H1 (cell line): ENCODE measurements at regions of chr12 and their contacts with region 1.

Region 1: DNA sequence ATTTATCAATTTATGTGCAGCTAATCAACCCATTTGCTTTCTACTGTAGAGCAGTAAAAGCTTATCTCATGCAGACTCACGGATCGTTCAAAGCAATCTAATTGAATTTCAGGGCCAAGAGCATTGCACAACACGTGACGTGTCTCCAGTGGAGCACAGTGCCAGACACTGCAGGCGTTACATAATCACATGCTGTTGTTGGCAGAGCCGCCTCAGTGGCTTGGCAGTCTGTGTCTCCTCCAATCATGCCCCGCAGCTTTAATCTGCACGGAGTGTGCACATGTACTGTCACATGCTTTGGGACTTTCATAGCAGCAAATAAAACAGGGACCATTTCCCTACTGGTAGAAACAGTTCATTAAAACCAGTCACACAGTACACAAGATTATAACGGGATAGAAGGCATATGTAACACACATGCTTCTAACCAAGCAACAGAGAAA is 309.3 kb downstream of the ITPR2 start:
- DNase-seq: no peak
- H3K4me3 ChIP-seq: no peak overlapping the region
- H3K27ac ChIP-seq: no peak overlapping the region
- H3K4me1 ChIP-seq: peaks cover 0 to 2% (median 0%) of the 10 kb centered on the region in 4 experiments; a peak in 1 of 7 replicates
- H3K27me3 ChIP-seq: no peaks in the 10 kb centered on the region
- CTCF ChIP-seq: no peak
- EP300 ChIP-seq: no peak
- POLR2A ChIP-seq: no peak
- RAD21 ChIP-seq: no peak

Region 2: DNA sequence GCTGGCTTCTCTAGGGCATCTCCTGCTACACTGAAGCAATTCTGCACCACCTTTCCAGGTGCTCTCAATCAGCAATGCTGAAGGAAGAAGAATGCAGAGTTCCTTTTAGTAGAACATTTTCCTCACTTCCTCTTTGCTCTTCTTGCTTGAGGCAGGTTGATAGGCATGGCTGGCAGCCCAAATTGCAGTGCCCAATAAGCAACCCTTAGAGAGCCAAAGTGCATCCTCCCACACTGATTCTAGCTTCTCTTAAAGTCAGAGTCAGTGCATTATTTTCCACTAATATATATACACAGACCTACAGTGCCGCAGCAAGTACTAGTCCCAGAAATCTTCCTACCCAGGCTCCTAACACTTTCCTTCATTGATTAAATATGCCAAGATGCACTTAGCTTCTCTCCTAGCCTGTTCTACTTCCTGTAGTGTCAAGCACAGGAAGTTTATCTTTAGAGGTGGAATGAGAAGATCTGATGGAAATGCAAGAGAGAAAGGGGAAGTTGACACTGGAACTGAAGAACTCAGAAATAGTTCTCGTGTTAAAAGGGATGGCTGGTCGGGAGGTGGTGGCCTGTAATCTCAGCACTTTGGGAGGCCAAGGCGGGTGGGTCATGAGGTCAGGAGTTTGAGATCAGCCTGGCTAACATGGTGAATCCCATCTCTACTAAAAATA is 195.6 kb before region 1 on chr12:
- CTCF ChIA-PET with region 1: no interaction called
- POLR2A ChIA-PET with region 1: no interaction called
- DNase-seq: no peak
- H3K4me3 ChIP-seq: no peak overlapping the region
- H3K27ac ChIP-seq: no peak overlapping the region
- H3K4me1 ChIP-seq: peaks cover 0 to 2% (median 0%) of the 10 kb centered on the region in 4 experiments; a peak in 2 of 7 replicates
- H3K27me3 ChIP-seq: no peaks in the 10 kb centered on the region
- CTCF ChIP-seq: no peak
- EP300 ChIP-seq: no peak
- POLR2A ChIP-seq: no peak
- RAD21 ChIP-seq: no peak

Region 3: DNA sequence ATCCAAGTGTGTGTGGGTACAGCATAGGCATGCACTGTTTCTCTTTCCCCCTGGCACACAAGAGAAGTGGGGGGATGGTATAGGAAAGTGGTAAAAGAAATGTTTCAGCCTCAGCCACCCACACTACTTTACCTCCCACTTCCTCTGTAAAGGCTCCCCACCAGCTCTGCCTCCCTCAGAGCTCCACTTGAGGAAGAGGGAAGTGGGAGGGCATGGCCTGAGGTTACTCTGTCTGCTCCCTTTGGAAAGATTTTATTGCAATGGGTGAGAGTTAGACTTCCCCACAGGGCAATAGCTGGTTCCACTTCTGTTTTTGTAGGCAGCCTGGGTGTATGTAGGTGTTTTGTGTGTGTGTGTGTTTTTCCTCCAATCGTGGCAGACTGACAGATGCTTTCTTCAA is 183.1 kb before region 1 on chr12:
- CTCF ChIA-PET with region 1: no interaction called
- POLR2A ChIA-PET with region 1: no interaction called
- DNase-seq: no peak
- H3K4me3 ChIP-seq: no peak overlapping the region
- H3K27ac ChIP-seq: no peak overlapping the region
- H3K4me1 ChIP-seq: peaks cover 0 to 6% (median under 1%) of the 10 kb centered on the region in 4 experiments; a peak in 3 of 7 replicates
- H3K27me3 ChIP-seq: no peaks in the 10 kb centered on the region
- CTCF ChIP-seq: no peak
- EP300 ChIP-seq: no peak
- POLR2A ChIP-seq: no peak
- RAD21 ChIP-seq: no peak

Region 4: DNA sequence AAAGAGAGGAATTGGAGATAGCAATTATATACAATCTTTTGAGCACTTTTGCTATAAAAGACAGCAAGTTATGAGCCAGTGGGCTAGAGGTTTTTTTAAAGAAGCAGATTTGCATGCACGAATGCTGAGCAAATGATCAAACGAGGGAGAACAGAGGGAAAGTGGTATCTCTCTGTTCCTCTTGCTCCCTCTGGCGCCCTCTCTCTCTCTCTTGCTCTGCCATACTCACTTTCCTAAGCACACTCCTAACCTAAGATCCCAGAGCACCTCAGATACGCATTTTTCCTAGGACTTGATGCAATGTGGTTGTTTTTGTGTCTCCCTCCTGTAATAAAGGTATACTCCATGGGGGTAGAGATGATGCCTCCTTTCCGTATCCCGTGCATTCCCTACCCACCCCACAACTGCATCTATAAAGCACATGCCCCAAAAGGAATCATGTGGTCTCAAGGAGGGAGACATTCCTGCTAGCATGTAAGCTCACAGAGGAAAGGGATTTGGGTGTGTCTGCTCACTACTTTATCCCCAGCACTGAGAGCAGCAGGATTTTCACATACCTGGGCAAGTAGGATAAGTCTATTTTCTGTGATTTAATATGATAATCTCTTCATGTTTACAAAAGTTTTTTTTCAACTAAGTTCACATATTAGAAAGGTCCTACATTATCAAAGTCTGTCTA is 58.2 kb before region 1 on chr12:
- CTCF ChIA-PET with region 1: interaction called, 12 read pairs
- POLR2A ChIA-PET with region 1: no interaction called
- DNase-seq: no peak
- H3K4me3 ChIP-seq: no peak overlapping the region
- H3K27ac ChIP-seq: no peak overlapping the region
- H3K4me1 ChIP-seq: peaks cover 0 to 8% (median 2%) of the 10 kb centered on the region in 4 experiments; a peak in 3 of 7 replicates
- H3K27me3 ChIP-seq: no peaks in the 10 kb centered on the region
- CTCF ChIP-seq: peak in 1 of 3 experiments; percentile 55; a peak in 2 of 4 replicates
- EP300 ChIP-seq: no peak
- POLR2A ChIP-seq: no peak
- RAD21 ChIP-seq: peak; percentile 30 to 31; a peak in 2 of 4 replicates